Calu3 (cell line): ENCODE measurements at regions of chr1 and their contacts with region 1.

Region 1: GRCh38 chr1:31955917-31956736 is 18.0 kb upstream of the PTP4A2 start:
- DNase-seq: peak; percentile 92
- H3K4me3 Mint-ChIP-seq: peak overlapping the region; percentile 20
- H3K27ac Mint-ChIP-seq: peak overlapping the region; percentile 100
- H3K4me1 Mint-ChIP-seq: peaks cover 54% of the 10 kb centered on the region
- H3K27me3 Mint-ChIP-seq: no peaks in the 10 kb centered on the region
- CTCF ChIP-seq: no peak

Region 2: GRCh38 chr1:31912839-31913239 is 43.3 kb before region 1 on chr1:
- CTCF ChIA-PET with region 1: no interaction called
- intact Hi-C with region 1: no loop called
- DNase-seq: no peak
- H3K4me3 Mint-ChIP-seq: no peak overlapping the region
- H3K27ac Mint-ChIP-seq: no peak overlapping the region
- H3K4me1 Mint-ChIP-seq: no peaks in the 10 kb centered on the region
- H3K27me3 Mint-ChIP-seq: no peaks in the 10 kb centered on the region
- CTCF ChIP-seq: no peak

Region 3: GRCh38 chr1:31944205-31945089 is 11.7 kb before region 1 on chr1:
- CTCF ChIA-PET with region 1: interaction called, 50 read pairs
- intact Hi-C with region 1: loop called (anchors 1 kb)
- DNase-seq: peak; percentile 89
- H3K4me3 Mint-ChIP-seq: peak overlapping the region; percentile 72
- H3K27ac Mint-ChIP-seq: peak overlapping the region; percentile 88
- H3K4me1 Mint-ChIP-seq: peaks cover 28% of the 10 kb centered on the region
- H3K27me3 Mint-ChIP-seq: no peaks in the 10 kb centered on the region
- CTCF ChIP-seq: no peak

Region 4: DNA sequence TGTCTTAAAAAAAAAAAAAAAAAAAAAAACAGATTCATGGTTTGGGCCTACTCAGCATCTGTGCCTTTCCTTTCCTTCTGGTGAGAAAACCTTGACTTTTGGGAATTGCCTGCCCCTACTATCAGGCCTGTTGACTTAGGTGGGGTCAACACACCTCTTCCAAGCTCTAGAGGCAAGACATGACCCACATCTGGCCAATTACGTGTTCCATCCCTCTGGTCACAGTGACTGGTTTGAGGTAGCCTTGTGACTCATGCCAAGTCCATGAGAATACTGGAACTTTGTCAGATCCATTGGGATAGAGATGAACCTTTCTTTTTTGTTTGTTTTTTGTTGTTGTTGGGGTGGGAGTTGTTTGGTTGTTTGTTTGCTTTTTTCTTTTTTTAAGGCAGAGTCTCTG is 20.3 kb after region 1 on chr1:
- CTCF ChIA-PET with region 1: no interaction called
- intact Hi-C with region 1: no loop called
- DNase-seq: no peak
- H3K4me3 Mint-ChIP-seq: no peak overlapping the region
- H3K27ac Mint-ChIP-seq: no peak overlapping the region
- H3K4me1 Mint-ChIP-seq: no peaks in the 10 kb centered on the region
- H3K27me3 Mint-ChIP-seq: peaks cover 11% of the 10 kb centered on the region
- CTCF ChIP-seq: no peak

Region 5: DNA sequence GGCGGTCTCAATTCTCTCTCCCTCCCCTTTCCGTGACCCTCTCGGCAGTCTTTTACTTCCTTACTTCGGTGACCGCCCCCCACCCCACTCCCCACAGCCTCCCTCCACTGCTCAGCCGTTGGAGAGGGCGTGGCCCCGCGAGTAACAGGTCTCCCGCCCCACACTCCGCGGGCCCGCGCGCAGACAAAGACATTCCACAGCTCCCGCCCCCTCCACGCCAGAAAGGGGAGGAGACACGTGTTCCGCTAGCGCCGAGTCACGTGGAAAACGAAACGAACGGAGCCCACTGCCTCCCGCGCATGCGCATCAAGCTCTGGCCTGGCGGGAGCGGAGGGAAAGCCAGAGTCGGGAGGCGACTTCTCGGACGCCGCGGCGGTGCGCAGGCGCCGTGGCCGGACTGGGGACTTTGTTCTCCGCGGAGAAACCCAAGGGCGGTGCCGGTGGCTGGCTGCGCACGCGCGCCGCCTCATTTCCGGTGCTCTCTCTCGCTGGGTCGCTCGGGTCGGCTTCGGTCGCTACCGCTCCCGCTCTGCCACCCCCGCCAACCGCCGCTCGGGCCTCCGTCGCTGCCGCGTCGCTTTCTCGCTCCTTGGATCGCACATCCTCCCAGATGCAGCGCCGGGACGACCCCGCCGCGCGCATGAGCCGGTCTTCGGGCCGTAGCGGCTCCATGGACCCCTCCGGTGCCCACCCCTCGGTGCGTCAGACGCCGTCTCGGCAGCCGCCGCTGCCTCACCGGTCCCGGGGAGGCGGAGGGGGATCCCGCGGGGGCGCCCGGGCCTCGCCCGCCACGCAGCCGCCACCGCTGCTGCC is 57.5 kb after region 1 on chr1 and contains the start of gene KHDRBS1:
- CTCF ChIA-PET with region 1: no interaction called
- intact Hi-C with region 1: no loop called
- DNase-seq: peak; percentile 98
- H3K4me3 Mint-ChIP-seq: peak within 1 kb of the TSS; percentile 98
- H3K27ac Mint-ChIP-seq: peak within 1 kb of the TSS; percentile 93
- H3K4me1 Mint-ChIP-seq: peaks cover 21% of the 10 kb centered on the region
- H3K27me3 Mint-ChIP-seq: no peaks in the 10 kb centered on the region
- CTCF ChIP-seq: no peak
- total RNA-seq, gene KHDRBS1: 158 and 159 TPM in 2 replicates